ENCODE measurements at regions of chr11 and their contacts with region 1.

Region 1: GRCh38 chr11:125404776-125405435 is 91.2 kb downstream of the FEZ1 start:
- DNase-seq: peak; percentile 67 to 87 (median 78)
- H3K4me3 ChIP-seq: no peak overlapping the region
- H3K27ac ChIP-seq: no peak overlapping the region
- H3K4me1 ChIP-seq: peaks cover 8% of the 10 kb centered on the region
- H3K27me3 ChIP-seq: no peaks in the 10 kb centered on the region
- CTCF ChIP-seq: peak; percentile 84 to 88 (median 87)
- EP300 ChIP-seq: no peak
- POLR2A ChIP-seq: no peak

Region 2: DNA sequence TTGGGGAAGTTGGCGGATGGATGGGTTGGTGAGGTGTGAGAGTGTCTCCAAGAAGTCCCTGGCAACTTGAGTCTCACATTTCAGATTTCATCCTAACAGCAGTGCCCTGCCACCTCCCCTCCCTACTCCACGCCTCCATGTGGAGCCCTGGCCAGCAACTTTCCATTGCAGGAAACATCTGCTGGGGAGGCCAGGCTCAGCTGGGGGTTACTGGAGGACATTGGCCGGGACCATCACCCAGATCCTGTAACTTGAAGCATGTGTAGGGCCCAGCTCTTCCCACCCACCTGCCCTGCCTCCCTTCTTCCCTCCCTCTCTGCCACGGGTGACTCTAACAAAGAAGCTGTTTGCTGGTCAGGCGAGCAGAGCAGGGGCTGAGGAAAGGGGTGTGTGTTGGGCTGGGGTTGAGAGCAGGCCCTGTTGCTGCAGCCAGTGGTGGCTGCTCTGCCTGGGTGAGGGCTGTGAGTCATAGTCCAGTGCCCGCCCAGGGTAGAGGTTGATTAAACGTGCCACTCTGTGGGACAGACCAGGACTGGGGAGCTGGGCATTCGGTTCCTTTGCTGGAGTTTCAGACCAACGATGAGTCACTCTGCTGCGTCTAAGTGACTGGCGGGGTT is 1814.5 kb before region 1 on chr11:
- intact Hi-C with region 1: no loop called
- DNase-seq: no peak
- H3K4me3 ChIP-seq: no peak overlapping the region
- H3K27ac ChIP-seq: no peak overlapping the region
- H3K4me1 ChIP-seq: peaks cover 2% of the 10 kb centered on the region
- H3K27me3 ChIP-seq: no peaks in the 10 kb centered on the region
- CTCF ChIP-seq: no peak
- EP300 ChIP-seq: no peak
- POLR2A ChIP-seq: no peak

Region 3: GRCh38 chr11:125345421-125346178 is 59.3 kb before region 1 on chr11:
- intact Hi-C with region 1: loop called in 1 of 4 experiments (anchors 10 kb)
- DNase-seq: peak; percentile 84 to 93 (median 91)
- H3K4me3 ChIP-seq: no peak overlapping the region
- H3K27ac ChIP-seq: peak overlapping the region; percentile 44 to 68
- H3K4me1 ChIP-seq: peaks cover 15% of the 10 kb centered on the region
- H3K27me3 ChIP-seq: no peaks in the 10 kb centered on the region
- CTCF ChIP-seq: peak; percentile 84 to 94 (median 87)
- EP300 ChIP-seq: no peak
- POLR2A ChIP-seq: no peak

Region 4: GRCh38 chr11:125494974-125495725 is 90.2 kb after region 1 on chr11:
- intact Hi-C with region 1: no loop called
- DNase-seq: peak; percentile 27 to 62 (median 53)
- H3K4me3 ChIP-seq: peak overlapping the region; percentile 80
- H3K27ac ChIP-seq: no peak overlapping the region
- H3K4me1 ChIP-seq: peaks cover 5% of the 10 kb centered on the region
- H3K27me3 ChIP-seq: no peaks in the 10 kb centered on the region
- CTCF ChIP-seq: no peak
- EP300 ChIP-seq: no peak
- POLR2A ChIP-seq: no peak

Measured in ovary (tissue), 10 donors.